ENCODE measurements at regions of chr14 and their contacts with region 1.

Region 1: GRCh38 chr14:75307700-75308379 is 29.2 kb downstream of the FOS start:
- DNase-seq: peak; percentile 96
- ATAC-seq: peak; percentile 67

Region 2: GRCh38 chr14:74333909-74334308 is 973.9 kb before region 1 on chr14:
- intact Hi-C with region 1: no loop called
- DNase-seq: no peak
- ATAC-seq: no peak

Region 3: DNA sequence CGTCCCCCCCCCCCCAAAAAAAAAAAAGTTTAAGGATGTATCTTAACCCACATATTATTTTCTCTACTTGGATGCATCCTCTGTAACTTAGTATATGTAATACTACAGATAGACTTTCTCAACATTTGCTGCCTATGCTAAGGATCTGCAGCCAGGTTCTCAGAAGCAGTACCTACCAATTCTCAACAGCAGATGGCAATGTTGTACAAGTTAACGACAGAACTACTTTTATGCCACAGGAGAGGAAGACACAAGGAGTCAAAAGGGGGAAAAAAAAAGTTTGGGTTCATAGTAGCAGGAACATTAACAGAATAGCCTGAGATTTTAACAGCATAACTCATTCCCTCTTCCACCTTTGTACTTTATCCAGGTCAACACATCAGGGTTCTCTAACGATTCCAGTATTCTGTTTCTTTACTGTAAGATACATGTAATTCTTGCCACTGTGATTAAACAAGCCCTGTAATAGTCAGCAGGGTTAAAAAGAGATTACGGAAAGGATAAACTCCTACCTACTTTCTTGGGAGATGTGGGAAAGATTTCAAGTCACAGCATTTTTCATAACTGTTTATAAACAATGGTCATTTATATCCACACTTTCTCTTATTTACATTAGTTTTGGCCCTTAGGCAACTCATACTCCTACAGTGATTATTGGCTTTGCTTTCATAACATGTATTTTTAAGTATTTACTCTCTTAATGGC is 175.3 kb before region 1 on chr14:
- intact Hi-C with region 1: loop called (anchors 5 kb)
- DNase-seq: no peak
- ATAC-seq: peak; percentile 85

Region 4: GRCh38 chr14:75340921-75341320 is 33.1 kb after region 1 on chr14:
- intact Hi-C with region 1: no loop called
- DNase-seq: peak; percentile 82
- ATAC-seq: peak; percentile 89

Region 5: DNA sequence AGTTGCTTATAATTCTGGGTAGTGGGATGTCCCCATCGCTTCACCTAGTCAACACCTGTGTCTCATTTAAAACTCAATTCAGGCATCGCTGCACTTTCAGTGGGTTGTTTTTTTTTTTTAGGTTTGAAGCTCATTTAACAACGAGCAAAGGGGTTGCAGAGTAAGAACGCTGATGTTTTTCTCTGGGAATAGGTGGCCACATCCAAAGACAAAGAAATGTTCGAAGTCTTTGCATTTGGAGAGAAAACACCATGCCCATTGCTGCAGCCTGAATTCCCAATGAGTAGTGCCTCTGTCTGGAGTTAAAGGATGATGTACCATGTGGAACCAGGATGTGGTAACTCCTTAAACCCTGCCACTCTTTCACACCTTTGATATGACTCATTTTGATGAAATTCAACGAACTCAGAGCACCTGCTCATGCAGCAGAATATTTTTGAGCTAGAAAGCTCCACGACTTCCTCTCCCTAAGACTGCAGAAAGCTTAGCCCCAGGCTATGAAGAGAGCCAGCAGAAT is 179.4 kb after region 1 on chr14:
- intact Hi-C with region 1: loop called (anchors 5 kb)
- DNase-seq: no peak
- ATAC-seq: no peak

Region 6: DNA sequence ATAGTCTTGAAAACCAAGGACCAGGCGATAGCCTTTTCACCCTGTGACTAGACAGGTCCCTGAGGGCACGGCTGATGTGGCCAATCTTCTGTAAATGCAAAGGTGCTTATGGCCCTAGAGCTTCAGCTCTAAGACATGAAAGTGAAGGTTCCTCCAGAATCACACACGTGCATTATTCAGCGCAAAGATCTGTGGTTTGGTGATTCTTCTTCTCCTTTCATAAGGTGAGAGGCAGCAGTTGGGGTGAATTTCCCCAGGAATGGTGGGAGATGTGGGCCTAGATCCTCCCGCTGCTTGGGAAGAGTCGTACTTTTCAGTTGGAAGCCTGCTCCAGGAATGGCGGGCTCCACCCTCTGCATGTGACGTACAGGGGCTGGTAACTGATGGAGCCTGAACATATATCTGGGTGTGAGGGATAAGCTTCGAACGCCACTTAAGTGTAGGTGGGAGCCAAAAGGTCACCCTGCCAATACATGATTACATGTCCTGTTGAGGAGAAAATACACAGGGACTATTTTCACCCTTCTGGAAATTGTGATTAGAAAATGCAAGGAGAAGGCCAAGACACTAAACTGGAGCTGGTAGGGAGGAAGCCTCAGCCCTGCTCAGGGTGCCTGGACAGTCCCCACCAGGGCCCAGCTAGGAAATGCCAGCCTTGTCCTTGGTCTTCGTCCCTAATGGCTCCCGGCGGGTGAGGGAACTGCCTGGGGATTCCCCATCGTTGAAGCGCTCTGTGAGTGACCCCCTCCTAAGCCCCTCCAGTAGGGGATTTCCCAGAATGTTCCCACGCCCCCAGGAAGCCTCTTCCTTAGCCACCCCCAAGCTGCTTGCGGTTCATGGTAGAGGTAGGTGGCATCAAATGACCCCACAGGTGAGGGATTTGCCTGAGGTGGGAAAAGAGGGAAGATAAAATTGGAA is 232.0 kb after region 1 on chr14:
- intact Hi-C with region 1: no loop called
- DNase-seq: no peak
- ATAC-seq: no peak

Measured in sciatic nerve (tissue), 2 donors.